Dendritic cell treated with granulocyte-macrophage colony-stimulating factor and Interleukin-4, amounts not matched to agents 40 ng/mL and 50 ng/mL, for 4 days (primary cell): ENCODE measurements at regions of chr10 and their contacts with region 1.

Region 1: DNA sequence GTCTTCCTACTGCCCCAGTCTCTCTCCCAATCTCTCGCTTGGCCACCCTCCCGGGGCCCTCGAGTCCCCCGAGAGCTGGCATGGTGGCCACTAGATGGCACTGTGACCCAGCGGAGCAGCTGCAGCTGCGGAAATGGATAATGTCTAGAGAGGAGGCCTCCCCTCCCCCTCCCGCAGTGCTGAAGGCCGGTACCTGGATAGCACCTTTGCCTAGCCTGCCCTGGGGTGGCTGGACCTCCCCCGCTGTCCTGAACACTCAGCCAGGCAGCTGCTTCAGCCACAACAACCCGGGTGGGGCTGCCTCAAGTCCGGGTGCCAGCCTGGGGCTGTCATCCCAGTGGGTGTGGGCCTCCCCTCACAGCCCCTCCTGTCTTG is 65.2 kb downstream of the GOLGA7B start:
- H3K4me3 Mint-ChIP-seq: no peak overlapping the region
- H3K27ac Mint-ChIP-seq: no peak overlapping the region
- H3K4me1 Mint-ChIP-seq: no peaks in the 10 kb centered on the region
- H3K27me3 Mint-ChIP-seq: peaks cover 42% of the 10 kb centered on the region

Region 2: GRCh38 chr10:97250952-97251351 is 663.9 kb before region 1 on chr10:
- intact Hi-C with region 1: no loop called
- H3K4me3 Mint-ChIP-seq: no peak overlapping the region
- H3K27ac Mint-ChIP-seq: no peak overlapping the region
- H3K4me1 Mint-ChIP-seq: peaks cover 2% of the 10 kb centered on the region
- H3K27me3 Mint-ChIP-seq: no peaks in the 10 kb centered on the region

Region 3: GRCh38 chr10:98028168-98028770 is 113.4 kb after region 1 on chr10:
- intact Hi-C with region 1: loop called (anchors 5 kb)
- H3K4me3 Mint-ChIP-seq: no peak overlapping the region
- H3K27ac Mint-ChIP-seq: no peak overlapping the region
- H3K4me1 Mint-ChIP-seq: no peaks in the 10 kb centered on the region
- H3K27me3 Mint-ChIP-seq: peaks cover 66% of the 10 kb centered on the region

Region 4: GRCh38 chr10:98045785-98046389 is 131.1 kb after region 1 on chr10:
- intact Hi-C with region 1: loop called (anchors 1 kb)
- H3K4me3 Mint-ChIP-seq: no peak overlapping the region
- H3K27ac Mint-ChIP-seq: no peak overlapping the region
- H3K4me1 Mint-ChIP-seq: no peaks in the 10 kb centered on the region
- H3K27me3 Mint-ChIP-seq: peaks cover 33% of the 10 kb centered on the region